ENCODE measurements at regions of chr15 and their contacts with region 1.

Region 1: DNA sequence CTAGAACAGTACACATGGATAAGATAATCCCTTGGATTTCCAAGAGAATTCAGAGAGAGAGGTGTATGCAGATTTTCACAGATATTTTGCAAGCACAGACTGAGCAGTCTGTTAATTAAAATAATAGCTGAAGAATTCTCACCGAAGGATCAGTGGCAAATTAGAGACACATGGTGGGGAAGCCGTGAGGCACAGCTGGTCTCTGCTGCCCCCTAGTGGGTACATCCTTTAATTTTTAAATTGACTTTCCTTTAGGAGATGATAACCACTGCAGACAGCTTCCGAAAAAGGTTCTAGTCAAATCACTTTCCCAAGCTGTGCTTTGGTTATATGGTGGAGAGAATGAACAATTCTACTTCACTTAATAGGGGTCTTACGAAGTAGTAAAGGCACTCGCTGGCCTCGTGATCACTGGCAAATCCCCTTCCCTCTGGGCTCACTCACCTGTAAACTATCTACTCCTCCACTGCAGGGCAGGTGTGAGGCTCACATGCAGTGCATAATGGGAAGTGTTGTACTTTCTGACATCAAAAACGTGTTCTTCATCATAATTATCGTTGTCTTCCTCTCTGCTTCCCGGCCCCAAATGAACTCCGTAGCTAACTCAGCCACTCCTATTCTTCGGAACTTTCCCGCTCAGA is 19.5 kb downstream of the MESD start:
- DNase-seq: peak; percentile 34 to 81 (median 60)
- H3K4me3 ChIP-seq: no peak overlapping the region
- H3K27ac ChIP-seq: no peak overlapping the region
- H3K4me1 ChIP-seq: no peaks in the 10 kb centered on the region
- H3K27me3 ChIP-seq: no peaks in the 10 kb centered on the region
- CTCF ChIP-seq: peak; percentile 72 to 97 (median 80)
- POLR2A ChIP-seq: no peak

Region 2: GRCh38 chr15:80309769-80310384 is 660.3 kb before region 1 on chr15:
- intact Hi-C with region 1: no loop called
- DNase-seq: peak in 4 of 7 donors; percentile 36 to 54 (median 41)
- H3K4me3 ChIP-seq: no peak overlapping the region
- H3K27ac ChIP-seq: no peak overlapping the region
- H3K4me1 ChIP-seq: peaks cover 0 to 4% of the 10 kb centered on the region in 2 donors
- H3K27me3 ChIP-seq: no peaks in the 10 kb centered on the region
- CTCF ChIP-seq: peak; percentile 32 to 64 (median 52)
- POLR2A ChIP-seq: no peak

Region 3: GRCh38 chr15:80567721-80568157 is 402.4 kb before region 1 on chr15:
- intact Hi-C with region 1: loop called (anchors 5 to 10 kb)
- DNase-seq: peak; percentile 54 to 83 (median 65)
- H3K4me3 ChIP-seq: no peak overlapping the region
- H3K27ac ChIP-seq: no peak overlapping the region
- H3K4me1 ChIP-seq: no peaks in the 10 kb centered on the region
- H3K27me3 ChIP-seq: no peaks in the 10 kb centered on the region
- CTCF ChIP-seq: peak; percentile 55 to 81 (median 74)
- POLR2A ChIP-seq: no peak

Region 4: DNA sequence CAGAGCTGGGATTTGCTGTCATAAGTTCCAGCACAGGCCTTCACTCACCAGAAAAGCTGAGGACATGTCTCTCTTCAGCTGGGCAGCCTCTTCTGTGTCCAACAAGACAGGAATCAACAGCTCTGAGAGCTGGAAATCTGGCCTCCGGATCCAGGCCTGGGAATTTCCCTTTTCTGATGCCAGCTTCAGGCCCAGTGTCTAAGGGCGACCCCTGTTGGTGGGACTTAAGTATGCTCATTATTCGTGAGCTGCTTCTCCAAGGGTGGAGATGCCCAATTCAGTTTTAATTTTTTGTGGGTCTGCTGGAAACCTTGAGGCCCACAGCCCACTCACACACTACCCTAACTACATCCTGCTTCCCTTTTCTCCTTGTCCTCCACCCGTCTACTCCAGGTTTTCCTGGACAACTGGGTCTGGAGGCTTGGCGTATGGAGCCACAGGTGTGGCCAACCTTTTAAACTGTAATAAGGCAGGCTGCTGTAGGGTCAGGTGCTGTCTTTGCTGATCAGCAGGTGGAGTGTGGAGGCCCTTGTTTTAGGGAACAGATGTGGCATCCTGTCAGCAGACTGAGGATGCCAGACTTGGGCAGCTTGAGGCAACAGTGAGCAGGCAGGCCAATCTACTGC is 193.6 kb before region 1 on chr15:
- intact Hi-C with region 1: loop called (anchors 5 to 10 kb)
- DNase-seq: peak; percentile 73 to 90 (median 77)
- H3K4me3 ChIP-seq: no peak overlapping the region
- H3K27ac ChIP-seq: no peak overlapping the region
- H3K4me1 ChIP-seq: peaks cover 5 to 20% of the 10 kb centered on the region in 2 donors
- H3K27me3 ChIP-seq: peaks cover 21% of the 10 kb centered on the region
- CTCF ChIP-seq: peak; percentile 74 to 85 (median 80)
- POLR2A ChIP-seq: no peak

Region 5: DNA sequence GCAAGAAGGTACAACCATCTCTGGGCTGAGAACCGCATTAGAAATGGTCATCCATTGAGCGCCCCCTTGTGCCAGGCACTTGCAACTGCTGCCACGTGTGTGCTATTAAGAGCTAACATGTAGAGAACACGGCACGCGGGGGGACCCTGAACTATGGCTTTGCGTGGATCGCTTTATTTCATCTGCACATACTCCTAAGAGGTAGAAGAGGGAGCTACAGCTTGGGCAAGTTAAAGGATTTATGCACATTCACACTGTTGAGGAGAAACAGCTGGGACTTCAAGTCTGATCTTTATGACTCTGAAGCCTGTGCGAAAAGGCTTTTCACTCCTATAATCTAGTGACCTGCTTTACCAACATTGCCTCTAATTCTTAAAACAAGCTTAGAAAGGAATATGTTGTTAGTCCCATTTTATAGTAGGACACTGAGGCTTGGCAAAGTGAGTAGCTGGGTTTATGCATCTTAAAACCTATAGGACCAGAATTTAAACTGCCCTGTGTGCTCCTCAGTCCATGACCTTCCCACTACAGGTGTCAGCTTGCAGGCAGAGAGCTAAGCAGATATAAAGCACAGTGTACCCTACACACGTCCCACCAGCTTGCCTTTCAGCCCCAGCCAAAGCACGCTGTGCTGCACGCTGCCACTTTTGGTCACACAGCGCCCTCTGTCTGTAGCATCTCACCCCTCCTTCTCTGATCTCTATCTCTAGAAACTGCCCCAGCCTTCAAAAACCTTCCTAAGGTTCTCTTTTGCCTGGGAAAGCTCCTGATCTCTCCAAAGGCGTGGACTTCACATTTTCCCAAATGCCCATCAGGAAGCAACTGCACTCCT is 296.0 kb after region 1 on chr15:
- intact Hi-C with region 1: loop called in 1 of 2 experiments (anchors 10 kb)
- DNase-seq: peak; percentile 66 to 91 (median 83)
- H3K4me3 ChIP-seq: no peak overlapping the region
- H3K27ac ChIP-seq: no peak overlapping the region
- H3K4me1 ChIP-seq: peaks cover 0 to 3% of the 10 kb centered on the region in 2 donors
- H3K27me3 ChIP-seq: no peaks in the 10 kb centered on the region
- CTCF ChIP-seq: peak; percentile 74 to 90 (median 80)
- POLR2A ChIP-seq: no peak